HCT116 (cell line): ENCODE measurements at regions of chr9 and their contacts with region 1.

Region 1: DNA sequence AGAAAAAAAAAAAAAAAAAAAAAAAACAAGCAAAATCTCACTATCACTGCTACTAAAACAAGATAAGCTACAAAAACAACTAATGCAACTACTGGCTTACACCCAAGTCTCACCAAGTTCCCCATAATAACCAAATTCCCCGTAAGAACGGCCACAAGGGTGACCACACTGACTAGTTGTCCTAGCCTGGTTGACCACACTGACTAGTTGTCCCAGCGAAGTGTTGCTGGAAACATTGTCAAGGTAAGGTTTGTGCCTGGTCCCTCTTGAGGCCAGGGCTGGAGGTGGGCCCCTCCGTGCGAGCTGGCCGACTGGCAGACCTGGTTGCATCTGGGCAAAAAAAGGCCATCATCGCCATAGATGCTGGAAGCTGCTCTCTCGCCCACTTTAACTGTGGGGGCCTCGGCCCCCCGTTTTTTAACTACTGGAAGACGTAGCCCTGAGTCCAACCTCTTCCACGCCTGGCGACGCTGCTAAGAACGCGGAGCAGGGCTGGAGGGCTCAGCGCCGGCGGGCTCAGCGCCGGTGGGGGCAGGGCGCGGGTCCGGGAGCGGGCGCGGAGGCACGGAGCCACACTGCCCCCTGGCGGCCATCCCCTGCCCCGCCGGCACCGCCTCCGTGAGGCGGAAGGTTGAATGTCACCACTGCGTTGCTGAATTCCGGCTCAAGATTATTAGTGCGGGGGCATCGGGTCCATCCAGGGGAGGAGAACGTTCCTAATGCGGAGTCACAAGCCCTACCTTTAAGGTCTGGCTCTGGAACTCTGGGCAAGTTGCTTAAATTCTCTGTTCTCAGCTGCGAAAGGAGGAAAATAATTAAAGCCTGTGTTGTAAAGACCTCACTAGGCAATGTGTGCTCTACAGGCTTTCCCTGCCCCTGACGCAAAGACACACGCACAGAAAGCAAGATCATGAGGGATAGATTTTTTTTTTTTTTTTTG is 84.0 kb downstream of the HSD17B3 start:
- DNase-seq: no peak
- ATAC-seq: peak; percentile 92
- H3K4me3 ChIP-seq: peak overlapping the region in 1 of 2 experiments; percentile 30; a peak in 2 of 4 replicates
- H3K27ac ChIP-seq: no peak overlapping the region; the same call in 1 of the 2 replicates
- H3K4me1 ChIP-seq: peaks cover 5 to 8% of the 10 kb centered on the region in 2 experiments; a peak in 3 of 4 replicates
- H3K27me3 ChIP-seq: 0 out of 2 replicates have a peak, but pooled peaks cover 3% of the 10 kb centered on the region
- CTCF ChIP-seq: peak; percentile 90 to 97 (median 95)
- POLR2A ChIP-seq: no peak
- RAD21 ChIP-seq: peak; percentile 92

Region 2: DNA sequence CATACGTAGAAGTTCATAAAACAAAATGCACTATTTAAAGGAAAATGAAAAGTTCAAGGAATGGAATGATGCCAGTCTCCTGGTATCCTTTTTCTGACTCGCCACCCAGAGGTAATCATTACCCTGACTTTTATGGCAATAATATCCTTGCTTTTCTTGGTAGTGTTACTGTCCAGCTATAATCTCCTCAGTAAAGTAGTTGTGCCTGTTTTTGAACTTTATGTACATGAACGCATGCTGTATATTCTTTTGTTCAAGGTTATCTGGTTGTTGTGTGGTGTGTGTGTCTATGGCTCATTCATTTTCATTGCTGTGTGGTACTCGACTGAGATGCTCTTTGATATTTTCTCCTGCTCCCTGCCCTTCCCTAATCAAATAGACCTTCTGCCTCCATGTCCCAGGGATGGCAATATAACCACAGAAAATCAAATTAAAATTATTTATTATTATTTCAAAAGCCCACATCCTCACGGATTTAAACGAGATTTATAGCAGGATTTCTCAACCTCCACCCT is 1549.5 kb before region 1 on chr9:
- CTCF ChIA-PET with region 1: no interaction called
- POLR2A ChIA-PET with region 1: no interaction called
- RAD21 ChIA-PET with region 1: no interaction called
- intact Hi-C with region 1: loop called (anchors 5 kb)
- DNase-seq: no peak
- ATAC-seq: peak; percentile 37
- H3K4me3 ChIP-seq: peak overlapping the region; percentile 41 to 70; a peak in 2 of 4 replicates
- H3K27ac ChIP-seq: no peak overlapping the region
- H3K4me1 ChIP-seq: peaks cover 5 to 17% of the 10 kb centered on the region in 2 experiments
- H3K27me3 ChIP-seq: no peaks in the 10 kb centered on the region
- CTCF ChIP-seq: no peak
- POLR2A ChIP-seq: no peak
- RAD21 ChIP-seq: no peak

Region 3: GRCh38 chr9:94783102-94783664 is 1434.8 kb before region 1 on chr9:
- CTCF ChIA-PET with region 1: no interaction called
- POLR2A ChIA-PET with region 1: no interaction called
- RAD21 ChIA-PET with region 1: no interaction called
- intact Hi-C with region 1: loop called (anchors 5 kb)
- DNase-seq: peak; percentile 69
- ATAC-seq: peak; percentile 94
- H3K4me3 ChIP-seq: no peak overlapping the region
- H3K27ac ChIP-seq: no peak overlapping the region
- H3K4me1 ChIP-seq: peaks cover 6 to 10% of the 10 kb centered on the region in 2 experiments; a peak in 3 of 4 replicates
- H3K27me3 ChIP-seq: no peaks in the 10 kb centered on the region
- CTCF ChIP-seq: peak; percentile 70 to 89 (median 72)
- POLR2A ChIP-seq: no peak
- RAD21 ChIP-seq: peak; percentile 95

Region 4: DNA sequence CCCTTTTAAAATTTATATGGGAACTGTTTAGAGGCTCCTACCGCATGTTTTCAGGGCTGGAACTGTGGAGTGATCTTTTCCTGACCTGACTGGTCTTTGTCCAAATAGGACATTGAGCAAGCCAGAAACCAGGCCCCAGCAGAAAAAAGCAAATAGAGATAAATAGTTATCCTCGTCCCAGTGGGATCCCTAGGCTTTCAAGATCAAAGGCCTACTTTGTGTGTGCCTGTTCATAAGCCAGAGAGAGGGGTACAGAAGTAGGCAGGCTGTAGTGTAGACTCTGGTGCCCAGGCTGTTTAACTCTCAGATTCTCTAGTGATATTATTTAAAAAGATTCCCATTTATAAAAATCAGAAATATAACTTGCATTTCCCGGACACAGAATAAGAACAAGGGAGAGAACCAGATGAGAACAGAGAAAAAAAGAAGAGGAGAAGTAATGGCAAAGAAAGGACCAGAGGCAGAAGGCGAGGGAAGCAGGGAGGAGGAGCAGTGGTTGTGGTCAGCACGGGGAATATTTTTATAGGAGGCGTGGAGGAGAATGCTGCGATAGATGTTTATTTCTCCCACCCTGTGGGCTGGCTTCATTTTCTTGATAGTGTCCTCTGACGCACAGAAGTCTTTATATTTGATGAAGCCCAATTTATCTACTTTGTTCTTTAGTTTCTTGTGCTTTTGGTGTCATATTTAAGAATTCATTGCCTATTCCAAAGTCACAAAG is 1390.3 kb before region 1 on chr9:
- CTCF ChIA-PET with region 1: no interaction called
- POLR2A ChIA-PET with region 1: no interaction called
- RAD21 ChIA-PET with region 1: no interaction called
- intact Hi-C with region 1: no loop called
- DNase-seq: no peak
- ATAC-seq: no peak
- H3K4me3 ChIP-seq: no peak overlapping the region
- H3K27ac ChIP-seq: no peak overlapping the region
- H3K4me1 ChIP-seq: peaks cover 0 to 8% of the 10 kb centered on the region in 2 experiments; a peak in 2 of 4 replicates
- H3K27me3 ChIP-seq: no peaks in the 10 kb centered on the region
- CTCF ChIP-seq: no peak
- POLR2A ChIP-seq: no peak
- RAD21 ChIP-seq: no peak

Region 5: DNA sequence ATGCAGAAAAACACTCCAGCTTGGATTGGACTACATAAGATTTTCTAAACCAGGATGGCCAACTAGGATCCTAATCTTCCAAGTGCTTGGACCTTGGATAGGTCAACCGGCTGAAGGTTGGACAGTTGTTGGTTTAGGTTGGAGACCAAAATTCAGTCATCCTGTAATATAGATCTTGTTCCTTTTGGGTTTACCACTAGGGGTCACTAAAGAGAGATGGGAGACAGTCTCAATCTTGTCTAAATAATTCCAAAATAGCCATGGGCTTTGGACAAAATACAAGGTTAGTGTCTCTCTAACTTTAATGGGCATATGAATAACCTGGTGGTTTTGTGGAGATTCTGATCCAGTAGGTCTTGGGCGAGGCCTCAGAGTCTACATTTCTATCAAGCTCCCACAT is 491.3 kb before region 1 on chr9:
- CTCF ChIA-PET with region 1: interaction called, 6 read pairs
- POLR2A ChIA-PET with region 1: no interaction called
- RAD21 ChIA-PET with region 1: no interaction called
- intact Hi-C with region 1: loop called (anchors 5 kb)
- DNase-seq: peak; percentile 26
- ATAC-seq: peak; percentile 81
- H3K4me3 ChIP-seq: no peak overlapping the region
- H3K27ac ChIP-seq: no peak overlapping the region
- H3K4me1 ChIP-seq: no peaks in the 10 kb centered on the region
- H3K27me3 ChIP-seq: no peaks in the 10 kb centered on the region
- CTCF ChIP-seq: peak; percentile 49 to 76 (median 74); a peak in 5 of 6 replicates
- POLR2A ChIP-seq: no peak
- RAD21 ChIP-seq: peak; percentile 71

Region 6: DNA sequence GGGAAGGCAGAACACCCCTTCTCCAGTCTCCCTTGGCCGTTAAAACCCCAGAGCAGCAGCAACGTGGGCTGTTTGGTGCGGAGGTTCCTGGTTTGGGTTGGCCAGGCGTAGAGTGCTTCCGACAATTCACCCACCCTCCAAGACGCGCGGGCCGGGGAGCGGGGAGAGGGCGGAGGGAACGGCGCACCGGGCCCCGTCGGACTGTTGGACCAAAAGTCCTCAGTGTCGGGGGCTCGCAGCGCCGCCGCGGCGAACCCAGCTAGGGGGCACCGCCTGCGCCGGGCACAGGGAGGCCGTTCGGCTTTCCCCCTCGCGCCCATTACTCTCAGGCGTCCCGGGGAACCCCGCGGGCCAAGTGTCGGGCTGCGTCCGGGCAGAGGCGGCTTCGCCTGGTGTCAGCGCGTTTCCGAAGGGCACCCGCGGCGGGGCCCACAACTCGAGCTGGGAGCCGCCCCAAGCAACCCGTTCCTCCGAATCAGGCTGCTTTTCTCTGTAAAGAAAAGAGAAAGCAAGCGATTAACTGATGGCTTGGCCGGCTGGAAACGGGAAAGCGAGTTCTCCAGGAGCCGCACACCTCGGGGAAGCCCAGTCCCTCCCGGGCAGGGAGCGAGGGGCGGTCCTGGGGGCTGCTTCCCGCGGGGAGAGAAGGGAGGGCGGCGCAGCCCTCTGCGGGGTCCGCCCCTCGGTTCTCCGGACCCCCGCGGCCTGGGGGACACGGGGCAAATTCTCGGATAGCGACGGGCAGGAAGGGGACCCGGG is 197.1 kb before region 1 on chr9:
- CTCF ChIA-PET with region 1: no interaction called
- POLR2A ChIA-PET with region 1: no interaction called
- RAD21 ChIA-PET with region 1: no interaction called
- intact Hi-C with region 1: no loop called
- DNase-seq: no peak
- ATAC-seq: no peak
- H3K4me3 ChIP-seq: no peak overlapping the region
- H3K27ac ChIP-seq: no peak overlapping the region
- H3K4me1 ChIP-seq: no peaks in the 10 kb centered on the region
- H3K27me3 ChIP-seq: no peaks in the 10 kb centered on the region
- CTCF ChIP-seq: no peak
- POLR2A ChIP-seq: no peak
- RAD21 ChIP-seq: no peak